ENCODE measurements at regions of chr9 and their contacts with region 1.

Region 1: GRCh38 chr9:138006576-138007233 is 129.1 kb downstream of the CACNA1B start:
- DNase-seq: no peak
- H3K27ac ChIP-seq: no peak overlapping the region
- CTCF ChIP-seq: no peak

Region 2: DNA sequence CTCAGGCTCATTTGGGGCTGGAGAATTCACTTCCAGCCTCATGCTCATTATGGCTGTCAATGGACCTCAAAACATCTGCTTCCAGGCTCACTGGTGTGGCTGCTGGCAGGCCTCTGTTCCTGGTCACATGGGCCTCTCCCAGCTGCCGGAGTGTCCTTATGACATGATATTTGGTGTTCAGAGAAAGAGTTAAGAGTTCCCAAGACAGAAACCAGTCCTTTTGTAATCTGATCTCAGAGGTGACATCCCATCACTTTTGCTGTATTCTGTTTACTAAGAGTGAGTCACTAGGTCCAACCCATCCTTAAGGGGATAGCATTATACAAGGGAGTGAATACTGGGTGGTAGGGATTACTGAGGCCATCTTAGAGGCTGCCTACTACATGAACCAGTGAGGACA is 24.5 kb before region 1 on chr9:
- CTCF ChIA-PET with region 1: no interaction called
- POLR2A ChIA-PET with region 1: interaction called, 11 read pairs
- DNase-seq: peak; percentile 44
- H3K27ac ChIP-seq: no peak overlapping the region
- CTCF ChIP-seq: no peak

Region 3: GRCh38 chr9:137989999-137990715 is 16.5 kb before region 1 on chr9:
- CTCF ChIA-PET with region 1: no interaction called
- POLR2A ChIA-PET with region 1: interaction called, 13 read pairs
- DNase-seq: peak; percentile 30
- H3K27ac ChIP-seq: no peak overlapping the region
- CTCF ChIP-seq: no peak

Region 4: DNA sequence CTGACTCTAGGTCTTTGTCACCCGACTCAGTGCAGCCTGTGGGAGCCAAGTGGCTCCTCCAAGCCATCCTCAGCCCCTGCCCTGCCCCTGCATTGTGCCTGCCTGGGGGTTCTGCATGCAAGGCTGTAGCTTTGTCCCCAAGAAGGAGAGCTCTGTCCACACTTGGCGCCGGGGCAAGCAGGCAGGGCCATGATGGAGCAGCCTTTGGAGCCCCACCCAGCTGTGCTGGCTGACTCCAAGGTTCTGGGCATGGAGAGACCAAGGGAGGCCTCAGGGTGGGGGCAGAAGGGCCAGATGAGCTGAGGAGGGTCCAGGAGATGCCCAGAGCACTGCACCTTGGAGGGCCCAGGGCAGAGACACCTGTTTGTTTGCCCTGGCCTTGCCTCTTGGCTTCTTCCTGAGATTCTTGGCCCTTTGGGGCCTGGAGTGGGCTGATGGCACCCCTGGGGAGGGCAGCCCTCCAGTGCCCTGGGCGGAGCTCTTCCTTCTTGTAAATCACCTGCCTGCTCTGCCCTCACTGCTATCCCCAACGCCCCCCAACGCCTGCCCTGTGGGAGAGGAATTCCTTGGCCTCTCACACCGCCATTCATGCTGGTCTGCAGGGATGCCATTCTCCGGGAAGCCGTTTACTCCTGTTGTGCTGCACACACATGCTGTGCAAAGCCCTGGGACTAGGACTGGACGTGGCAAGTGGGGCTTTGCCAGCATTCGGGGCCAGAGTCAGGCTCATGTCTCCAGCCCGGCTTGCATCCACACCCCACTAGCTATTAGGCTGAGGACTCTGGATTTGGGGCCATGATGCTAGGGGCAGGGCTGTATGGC is 97.4 kb after region 1 on chr9:
- CTCF ChIA-PET with region 1: no interaction called
- POLR2A ChIA-PET with region 1: no interaction called
- DNase-seq: no peak
- H3K27ac ChIP-seq: no peak overlapping the region
- CTCF ChIP-seq: no peak